Endothelial cell of umbilical vein (primary cell): ENCODE measurements at regions of chr11 and their contacts with region 1.

Region 1: GRCh38 chr11:35822815-35823495 is 120.9 kb upstream of the LDLRAD3 start:
- DNase-seq: no peak
- H3K4me3 ChIP-seq: no peak overlapping the region
- H3K27ac ChIP-seq: no peak overlapping the region
- H3K4me1 ChIP-seq: peaks cover 8% of the 10 kb centered on the region
- H3K27me3 ChIP-seq: no peaks in the 10 kb centered on the region
- CTCF ChIP-seq: no peak
- POLR2A ChIP-seq: no peak

Region 2: GRCh38 chr11:35623621-35624168 is 199.3 kb before region 1 on chr11:
- CTCF ChIA-PET with region 1: interaction called, 152 read pairs
- POLR2A ChIA-PET with region 1: no interaction called
- dilution Hi-C with region 1: no loop called
- intact Hi-C with region 1: no loop called
- DNase-seq: peak; percentile 61
- H3K4me3 ChIP-seq: no peak overlapping the region
- H3K27ac ChIP-seq: peak overlapping the region; percentile 51
- H3K4me1 ChIP-seq: peaks cover 41% of the 10 kb centered on the region
- H3K27me3 ChIP-seq: no peaks in the 10 kb centered on the region
- CTCF ChIP-seq: no peak
- POLR2A ChIP-seq: no peak

Region 3: GRCh38 chr11:35779409-35779808 is 43.5 kb before region 1 on chr11:
- CTCF ChIA-PET with region 1: interaction called, 18 read pairs
- POLR2A ChIA-PET with region 1: no interaction called
- dilution Hi-C with region 1: no loop called
- intact Hi-C with region 1: no loop called
- DNase-seq: no peak
- H3K4me3 ChIP-seq: no peak overlapping the region
- H3K27ac ChIP-seq: no peak overlapping the region
- H3K4me1 ChIP-seq: peaks cover 3% of the 10 kb centered on the region
- H3K27me3 ChIP-seq: no peaks in the 10 kb centered on the region
- CTCF ChIP-seq: no peak
- POLR2A ChIP-seq: no peak

Region 4: GRCh38 chr11:35907648-35908431 is 84.9 kb after region 1 on chr11:
- CTCF ChIA-PET with region 1: interaction called, 19 read pairs
- POLR2A ChIA-PET with region 1: no interaction called
- dilution Hi-C with region 1: no loop called
- intact Hi-C with region 1: no loop called
- DNase-seq: peak; percentile 82
- H3K4me3 ChIP-seq: no peak overlapping the region
- H3K27ac ChIP-seq: peak overlapping the region; percentile 16
- H3K4me1 ChIP-seq: peaks cover 26% of the 10 kb centered on the region
- H3K27me3 ChIP-seq: no peaks in the 10 kb centered on the region
- CTCF ChIP-seq: no peak
- POLR2A ChIP-seq: no peak

Region 5: DNA sequence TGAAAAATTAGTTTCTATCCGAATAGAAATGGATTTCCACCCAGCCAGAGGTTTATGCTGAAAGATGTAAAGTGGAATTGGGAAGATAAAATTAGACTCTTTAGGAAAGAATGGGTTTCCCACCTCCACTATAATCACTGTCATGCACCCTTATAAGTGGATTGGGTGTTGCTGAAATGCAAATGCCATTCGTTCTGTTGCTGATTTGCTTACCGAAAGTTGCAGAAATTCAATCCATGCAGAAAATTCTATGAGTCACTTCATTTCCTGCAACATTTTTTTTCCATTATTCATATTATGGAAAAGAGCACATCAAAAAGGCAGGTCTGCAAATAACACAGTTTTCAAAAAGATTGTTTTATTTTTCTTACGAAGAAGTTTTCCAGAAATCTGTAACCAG is 186.5 kb after region 1 on chr11:
- CTCF ChIA-PET with region 1: interaction called, 16 read pairs
- POLR2A ChIA-PET with region 1: no interaction called
- dilution Hi-C with region 1: no loop called
- intact Hi-C with region 1: no loop called
- DNase-seq: peak; percentile 82
- H3K4me3 ChIP-seq: peak overlapping the region in 1 of 3 experiments; percentile 51
- H3K27ac ChIP-seq: peak overlapping the region; percentile 82
- H3K4me1 ChIP-seq: peaks cover 51% of the 10 kb centered on the region
- H3K27me3 ChIP-seq: no peaks in the 10 kb centered on the region
- CTCF ChIP-seq: no peak
- POLR2A ChIP-seq: no peak

Region 6: GRCh38 chr11:36109850-36110606 is 287.1 kb after region 1 on chr11:
- CTCF ChIA-PET with region 1: interaction called, 32 read pairs
- POLR2A ChIA-PET with region 1: no interaction called
- dilution Hi-C with region 1: no loop called
- intact Hi-C with region 1: no loop called
- DNase-seq: no peak
- H3K4me3 ChIP-seq: no peak overlapping the region
- H3K27ac ChIP-seq: no peak overlapping the region
- H3K4me1 ChIP-seq: peaks cover 5% of the 10 kb centered on the region
- H3K27me3 ChIP-seq: no peaks in the 10 kb centered on the region
- CTCF ChIP-seq: no peak
- POLR2A ChIP-seq: no peak

Region 7: DNA sequence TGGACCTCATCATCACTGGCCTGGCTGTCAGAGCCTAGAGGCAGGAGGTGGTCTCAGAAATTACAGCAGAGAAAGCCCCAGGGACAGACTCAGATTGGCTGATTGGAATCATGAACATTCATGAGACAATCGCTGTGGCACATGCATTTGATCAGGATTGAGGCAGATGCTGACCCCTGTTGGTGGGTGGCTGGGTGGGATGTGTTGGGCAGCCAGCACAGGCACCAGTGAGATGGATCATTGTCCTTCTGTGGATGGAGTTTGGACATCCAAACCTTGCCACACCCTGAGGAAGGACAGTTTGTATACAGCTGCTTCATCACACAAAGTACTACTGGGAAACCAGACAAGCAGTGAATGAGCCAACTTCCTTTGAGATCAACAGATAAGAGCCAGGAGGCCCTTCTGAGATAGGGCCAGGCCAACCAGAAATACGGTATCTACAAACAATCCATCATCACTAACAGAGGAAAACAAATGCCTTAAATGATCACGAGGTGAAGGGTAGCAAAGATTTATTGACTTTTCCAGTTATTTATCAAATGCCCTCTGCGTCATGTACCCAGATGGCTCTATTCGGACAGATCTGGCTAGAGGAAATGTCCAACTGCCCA is 448.9 kb after region 1 on chr11:
- CTCF ChIA-PET with region 1: interaction called, 162 read pairs
- POLR2A ChIA-PET with region 1: no interaction called
- dilution Hi-C with region 1: loop called (anchors 25 kb)
- intact Hi-C with region 1: no loop called
- DNase-seq: no peak
- H3K4me3 ChIP-seq: no peak overlapping the region
- H3K27ac ChIP-seq: no peak overlapping the region
- H3K4me1 ChIP-seq: peaks cover 3% of the 10 kb centered on the region
- H3K27me3 ChIP-seq: no peaks in the 10 kb centered on the region
- CTCF ChIP-seq: peak in 1 of 2 donors; percentile 5
- POLR2A ChIP-seq: no peak